ENCODE measurements at regions of chr2 and their contacts with region 1.

Region 1: GRCh38 chr2:181077128-181077709 is 96.8 kb downstream of the UBE2E3 start:
- DNase-seq: no peak
- ATAC-seq: peak in 1 of 2 donors; percentile 49
- H3K4me3 ChIP-seq: no peak overlapping the region
- H3K27ac ChIP-seq: no peak overlapping the region
- H3K4me1 ChIP-seq: peaks cover 4 to 11% of the 10 kb centered on the region in 2 donors
- H3K27me3 ChIP-seq: no peaks in the 10 kb centered on the region
- CTCF ChIP-seq: peak in 4 of 5 experiments; percentile 28 to 60 (median 46)
- POLR2A ChIP-seq: no peak

Region 2: DNA sequence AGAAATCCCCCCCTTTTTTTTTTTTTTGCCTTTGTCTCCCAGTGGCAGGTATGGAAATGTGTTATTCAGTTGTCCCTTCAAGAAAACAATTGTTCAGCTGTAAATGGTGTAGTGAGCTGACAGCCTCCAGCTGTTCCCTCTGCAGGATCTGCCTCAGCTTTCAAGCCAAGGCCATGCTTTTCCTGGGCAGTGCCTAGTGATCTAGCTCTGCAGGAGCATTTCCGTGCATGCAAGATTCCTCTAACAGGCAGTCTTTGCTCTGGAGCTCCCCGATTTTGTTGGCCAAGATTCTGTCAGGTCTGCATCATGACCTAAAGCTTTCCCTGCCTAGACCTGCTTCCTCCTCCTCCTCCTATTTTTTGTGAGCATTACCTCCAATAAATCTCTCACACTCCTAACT is 397.5 kb before region 1 on chr2:
- in situ Hi-C with region 1: no loop called
- intact Hi-C with region 1: no loop called
- DNase-seq: no peak
- ATAC-seq: no peak
- H3K4me3 ChIP-seq: no peak overlapping the region
- H3K27ac ChIP-seq: no peak overlapping the region
- H3K4me1 ChIP-seq: no peaks in the 10 kb centered on the region
- H3K27me3 ChIP-seq: no peaks in the 10 kb centered on the region
- CTCF ChIP-seq: no peak
- POLR2A ChIP-seq: no peak

Region 3: GRCh38 chr2:181036445-181036844 is 40.8 kb before region 1 on chr2:
- in situ Hi-C with region 1: no loop called
- intact Hi-C with region 1: no loop called
- DNase-seq: no peak
- ATAC-seq: no peak
- H3K4me3 ChIP-seq: no peak overlapping the region
- H3K27ac ChIP-seq: no peak overlapping the region
- H3K4me1 ChIP-seq: peaks cover 7 to 11% of the 10 kb centered on the region in 2 donors
- H3K27me3 ChIP-seq: no peaks in the 10 kb centered on the region
- CTCF ChIP-seq: no peak
- POLR2A ChIP-seq: no peak

Region 4: GRCh38 chr2:181120625-181121024 is 43.4 kb after region 1 on chr2:
- in situ Hi-C with region 1: no loop called
- intact Hi-C with region 1: no loop called
- DNase-seq: no peak
- ATAC-seq: no peak
- H3K4me3 ChIP-seq: no peak overlapping the region
- H3K27ac ChIP-seq: no peak overlapping the region
- H3K4me1 ChIP-seq: no peaks in the 10 kb centered on the region
- H3K27me3 ChIP-seq: no peaks in the 10 kb centered on the region
- CTCF ChIP-seq: no peak
- POLR2A ChIP-seq: no peak

Region 5: DNA sequence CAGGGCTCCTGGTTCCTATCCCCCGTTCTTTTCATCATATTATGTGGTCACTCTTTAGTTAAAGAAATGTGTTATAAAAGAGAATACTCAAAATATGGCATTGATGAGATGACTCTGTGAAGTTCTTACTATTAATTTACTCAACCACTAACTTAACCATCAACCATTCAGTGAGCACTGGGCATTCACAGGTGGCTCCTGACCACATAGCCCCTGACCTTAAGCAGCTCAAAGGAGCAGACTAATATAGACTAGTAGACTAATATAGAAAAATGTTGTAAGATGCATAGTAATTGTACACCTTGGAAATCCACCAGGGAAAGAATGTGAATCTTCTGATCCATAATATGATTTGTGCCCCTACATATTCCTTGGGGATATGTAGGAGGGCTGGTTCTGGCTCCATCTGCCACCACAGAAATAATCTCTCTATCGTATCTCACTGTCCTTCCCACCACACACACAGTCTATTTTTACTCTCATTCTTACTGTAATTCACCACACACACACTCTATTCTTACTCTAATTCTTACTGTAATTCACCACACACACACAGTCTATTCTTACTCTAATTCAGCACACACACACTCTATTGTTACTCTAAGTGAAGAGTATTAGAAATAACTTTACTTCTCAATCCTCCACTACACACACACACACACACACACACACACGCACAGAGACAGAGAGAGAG is 191.1 kb after region 1 on chr2:
- in situ Hi-C with region 1: no loop called
- intact Hi-C with region 1: no loop called
- DNase-seq: no peak
- ATAC-seq: no peak
- H3K4me3 ChIP-seq: no peak overlapping the region
- H3K27ac ChIP-seq: no peak overlapping the region
- H3K4me1 ChIP-seq: no peaks in the 10 kb centered on the region
- H3K27me3 ChIP-seq: no peaks in the 10 kb centered on the region
- CTCF ChIP-seq: no peak
- POLR2A ChIP-seq: no peak

Region 6: GRCh38 chr2:181466661-181467576 is 389.7 kb after region 1 on chr2:
- in situ Hi-C with region 1: no loop called
- intact Hi-C with region 1: loop called (anchors 10 kb)
- DNase-seq: peak; percentile 2 to 17
- ATAC-seq: no peak
- H3K4me3 ChIP-seq: no peak overlapping the region
- H3K27ac ChIP-seq: no peak overlapping the region
- H3K4me1 ChIP-seq: no peaks in the 10 kb centered on the region
- H3K27me3 ChIP-seq: no peaks in the 10 kb centered on the region
- CTCF ChIP-seq: peak; percentile 12 to 68 (median 41)
- POLR2A ChIP-seq: no peak

Region 7: DNA sequence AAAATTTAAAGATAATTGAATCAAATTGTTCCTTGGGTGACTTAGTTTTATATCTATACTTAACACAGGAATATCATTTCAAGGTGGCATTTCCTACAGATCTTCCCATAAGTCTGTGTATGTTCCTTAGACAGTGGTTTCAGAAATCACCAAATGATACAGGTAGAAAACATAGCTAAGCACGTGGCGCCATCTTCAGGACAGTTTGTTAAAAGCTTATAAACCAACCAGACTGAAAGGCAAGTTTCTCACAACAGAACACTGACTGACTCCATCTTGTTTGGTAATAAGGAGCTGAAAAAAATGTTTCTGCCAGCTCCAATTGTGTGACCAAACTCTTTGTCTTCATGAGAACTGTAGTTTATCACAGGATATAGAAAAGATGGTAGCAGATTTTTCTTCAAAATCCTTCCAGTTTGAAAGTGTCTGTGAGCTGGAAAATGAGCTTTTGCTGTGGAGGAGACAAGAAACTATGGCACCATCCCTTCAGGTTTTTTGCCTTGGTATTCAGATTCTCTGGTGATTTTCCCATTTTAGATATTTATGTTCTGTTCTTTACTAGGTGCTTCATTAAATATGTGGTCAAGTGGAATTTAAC is 637.9 kb after region 1 on chr2:
- in situ Hi-C with region 1: loop called in 1 of 4 experiments (anchors 25 kb)
- intact Hi-C with region 1: loop called (anchors 10 kb)
- DNase-seq: peak; percentile 3 to 15
- ATAC-seq: peak in 1 of 2 donors; percentile 65
- H3K4me3 ChIP-seq: no peak overlapping the region
- H3K27ac ChIP-seq: no peak overlapping the region
- H3K4me1 ChIP-seq: no peaks in the 10 kb centered on the region
- H3K27me3 ChIP-seq: no peaks in the 10 kb centered on the region
- CTCF ChIP-seq: peak in 3 of 5 experiments; percentile 25 to 54 (median 48)
- POLR2A ChIP-seq: no peak

Measured in gastrocnemius medialis (tissue), 4 donors.